ENCODE measurements at regions of chr20 and their contacts with region 1.

Region 1: DNA sequence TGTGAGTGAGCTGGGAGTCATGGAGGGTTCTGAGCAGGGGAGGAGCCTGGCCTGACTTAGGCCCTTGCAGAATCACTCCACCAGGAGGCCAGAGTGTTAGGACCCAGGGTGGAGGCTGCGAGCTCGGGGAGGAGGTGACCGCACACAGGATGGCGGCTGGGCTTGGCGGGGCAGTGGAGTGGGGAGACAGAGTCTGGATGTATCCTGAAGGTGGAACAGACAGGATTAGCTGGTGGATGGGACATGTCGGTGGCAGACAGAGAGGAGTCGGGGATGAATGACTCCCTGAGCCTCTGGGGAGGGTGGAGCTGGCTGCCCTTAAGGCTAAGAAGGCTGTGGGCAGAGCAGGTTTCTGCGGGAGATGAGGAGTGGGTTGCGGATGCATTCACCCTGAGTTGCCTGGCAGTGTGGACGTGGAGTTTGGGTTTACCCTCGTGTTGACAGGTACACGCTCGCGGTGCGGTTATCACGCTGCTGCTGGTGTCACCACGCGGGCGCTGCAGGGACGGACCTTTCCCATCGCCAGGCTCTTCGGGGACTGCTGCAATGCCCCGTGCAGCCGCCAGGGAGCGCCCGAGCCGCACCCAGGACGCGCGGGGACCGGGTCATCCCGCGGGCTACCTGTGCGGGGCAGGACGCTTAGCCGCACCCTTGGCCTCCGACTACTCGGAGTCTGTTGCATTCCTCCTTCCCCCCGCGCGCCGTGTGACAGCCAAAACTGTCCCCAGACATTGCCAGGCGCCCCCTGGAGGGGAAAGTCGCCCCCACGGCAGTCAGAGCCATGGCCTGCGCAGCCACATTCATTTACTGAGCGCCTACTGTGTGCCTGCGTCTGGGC is 43.0 kb upstream of the PTGIS start:
- DNase-seq: peak; percentile 89
- ATAC-seq: peak; percentile 76
- H3K4me3 Mint-ChIP-seq: no peak overlapping the region
- H3K27ac Mint-ChIP-seq: no peak overlapping the region
- H3K4me1 Mint-ChIP-seq: peaks cover 15% of the 10 kb centered on the region
- H3K27me3 Mint-ChIP-seq: peaks cover 12% of the 10 kb centered on the region

Region 2: GRCh38 chr20:49338061-49338460 is 272.9 kb before region 1 on chr20:
- CTCF ChIA-PET with region 1: interaction called, 4 read pairs
- POLR2A ChIA-PET with region 1: no interaction called
- intact Hi-C with region 1: loop called (anchors 1 kb)
- DNase-seq: no peak
- ATAC-seq: no peak
- H3K4me3 Mint-ChIP-seq: no peak overlapping the region
- H3K27ac Mint-ChIP-seq: no peak overlapping the region
- H3K4me1 Mint-ChIP-seq: no peaks in the 10 kb centered on the region
- H3K27me3 Mint-ChIP-seq: peaks cover 5% of the 10 kb centered on the region

Region 3: DNA sequence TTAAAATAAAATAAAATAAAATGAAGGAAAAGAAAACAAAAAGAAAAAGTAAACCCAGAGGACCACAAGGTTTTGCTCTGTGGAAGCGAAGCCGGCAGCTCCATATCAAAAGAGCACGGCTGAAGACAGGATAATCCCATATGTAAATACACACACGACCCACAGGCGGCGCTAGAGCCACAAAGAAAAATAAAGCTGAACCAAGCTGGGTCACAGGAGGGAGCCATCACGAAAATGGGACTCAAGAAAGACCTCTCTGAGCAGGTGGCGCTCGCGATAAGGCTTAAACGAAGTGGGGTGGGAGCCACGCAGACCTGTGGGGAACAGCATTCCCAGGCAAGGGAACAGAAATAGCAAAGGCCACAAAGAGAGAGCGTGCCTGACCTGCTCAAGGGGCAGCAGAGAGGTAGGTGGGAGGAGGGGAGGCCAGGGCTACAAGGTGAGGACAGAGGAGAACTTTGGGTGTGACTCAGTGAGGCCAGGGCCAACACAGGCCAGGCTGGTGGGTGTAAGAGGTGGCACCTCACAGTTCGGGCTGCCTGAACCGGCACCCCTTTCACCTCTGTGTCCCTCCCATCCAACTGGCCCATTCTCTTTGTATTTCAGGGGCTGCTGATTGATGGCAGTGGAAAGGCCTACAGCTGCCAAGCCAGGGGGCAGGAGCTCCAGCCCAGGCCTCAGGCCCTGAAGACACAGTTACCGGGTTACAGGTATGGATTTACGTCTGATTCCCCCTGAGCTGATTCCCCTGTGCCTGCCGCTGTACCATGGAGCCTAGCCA is 69.0 kb before region 1 on chr20:
- CTCF ChIA-PET with region 1: interaction called, 145 read pairs
- POLR2A ChIA-PET with region 1: no interaction called
- intact Hi-C with region 1: loop called (anchors 1 kb)
- DNase-seq: peak; percentile 84
- ATAC-seq: peak; percentile 87
- H3K4me3 Mint-ChIP-seq: no peak overlapping the region
- H3K27ac Mint-ChIP-seq: peak overlapping the region; percentile 85
- H3K4me1 Mint-ChIP-seq: peaks cover 10% of the 10 kb centered on the region
- H3K27me3 Mint-ChIP-seq: peaks cover 11% of the 10 kb centered on the region

Region 4: DNA sequence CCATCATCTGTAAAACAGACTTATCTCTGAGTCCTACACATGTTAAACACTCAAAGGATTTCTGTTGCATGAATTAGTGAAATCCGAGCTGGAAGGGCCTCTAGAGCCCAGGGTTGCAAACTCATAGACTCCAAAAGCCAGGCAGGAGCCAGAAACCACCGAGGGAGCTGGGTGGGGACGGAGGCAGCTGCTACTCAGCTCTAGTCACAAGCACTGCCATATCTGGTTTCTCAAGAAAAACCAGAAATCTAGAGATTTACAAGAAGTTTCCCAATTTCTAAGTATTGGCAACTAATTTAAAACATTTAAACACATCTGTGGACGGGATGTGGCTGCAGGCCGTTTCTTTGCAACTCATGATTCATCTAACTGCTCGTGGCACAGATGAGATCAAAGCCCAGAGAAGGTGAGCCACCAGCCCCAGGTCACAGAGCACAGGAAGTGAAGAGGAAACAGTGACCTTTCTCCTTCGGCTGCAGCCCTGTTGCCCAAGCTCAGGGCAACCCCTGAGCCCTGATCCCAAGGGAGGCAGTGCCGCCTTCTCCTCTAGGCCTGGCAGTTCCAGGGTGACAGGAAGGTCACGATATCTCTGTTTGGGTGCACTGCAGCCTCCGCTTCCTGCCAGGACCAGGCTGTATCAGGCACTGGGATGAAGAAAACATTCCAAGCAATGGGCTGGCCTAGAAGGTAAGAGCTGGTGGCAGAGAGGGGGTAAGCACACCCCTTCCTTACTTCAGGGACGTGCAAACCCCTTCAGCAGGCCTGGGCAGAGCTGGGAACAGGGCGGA is 16.6 kb before region 1 on chr20:
- CTCF ChIA-PET with region 1: interaction called, 38 read pairs
- POLR2A ChIA-PET with region 1: no interaction called
- intact Hi-C with region 1: no loop called
- DNase-seq: peak; percentile 87
- ATAC-seq: peak; percentile 62
- H3K4me3 Mint-ChIP-seq: peak overlapping the region; percentile 76
- H3K27ac Mint-ChIP-seq: peak overlapping the region; percentile 96
- H3K4me1 Mint-ChIP-seq: peaks cover 77% of the 10 kb centered on the region
- H3K27me3 Mint-ChIP-seq: peaks cover 3% of the 10 kb centered on the region

Region 5: GRCh38 chr20:49846206-49846807 is 235.4 kb after region 1 on chr20:
- CTCF ChIA-PET with region 1: interaction called, 59 read pairs
- POLR2A ChIA-PET with region 1: no interaction called
- intact Hi-C with region 1: loop called (anchors 1 kb)
- DNase-seq: peak; percentile 67
- ATAC-seq: peak; percentile 81
- H3K4me3 Mint-ChIP-seq: no peak overlapping the region
- H3K27ac Mint-ChIP-seq: no peak overlapping the region
- H3K4me1 Mint-ChIP-seq: peaks cover 7% of the 10 kb centered on the region
- H3K27me3 Mint-ChIP-seq: no peaks in the 10 kb centered on the region

Region 6: DNA sequence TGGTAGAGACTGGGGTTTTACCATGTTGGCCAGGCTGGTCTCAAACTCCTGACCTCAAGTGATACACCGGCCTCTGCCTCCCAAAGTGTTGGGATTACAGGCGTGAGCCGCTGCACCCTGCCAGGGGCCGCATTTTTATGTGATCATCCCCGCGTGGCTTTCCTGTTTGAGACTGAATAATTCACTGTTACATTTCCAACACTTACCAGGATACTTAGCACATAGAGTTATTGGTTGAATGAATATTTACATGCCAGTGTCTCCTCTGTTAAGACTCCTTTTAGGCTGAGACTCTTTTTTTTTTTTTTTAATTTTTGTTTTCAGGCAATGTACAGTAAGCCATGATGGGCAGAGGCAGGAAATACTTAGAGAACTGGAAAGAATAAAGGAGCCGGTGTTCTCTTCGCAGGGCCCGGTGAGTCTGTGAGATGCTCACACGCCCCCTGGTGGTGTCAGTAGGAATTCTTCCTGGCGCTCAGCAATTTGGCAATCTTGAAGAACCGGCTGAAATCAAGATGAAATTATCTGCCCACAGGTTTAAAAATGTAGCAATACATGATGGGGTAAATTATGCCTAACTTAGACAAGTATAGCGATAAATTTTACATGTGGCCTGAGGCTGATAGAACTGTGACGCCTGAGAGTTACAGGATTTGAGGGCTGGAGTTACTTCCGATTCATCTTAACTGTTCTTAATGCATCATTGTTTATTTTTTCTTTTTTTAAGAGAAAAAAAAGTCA is 317.7 kb after region 1 on chr20:
- CTCF ChIA-PET with region 1: interaction called, 4 read pairs
- POLR2A ChIA-PET with region 1: no interaction called
- intact Hi-C with region 1: loop called (anchors 1 kb)
- DNase-seq: peak; percentile 90
- ATAC-seq: peak; percentile 98
- H3K4me3 Mint-ChIP-seq: no peak overlapping the region
- H3K27ac Mint-ChIP-seq: peak overlapping the region; percentile 63
- H3K4me1 Mint-ChIP-seq: peaks cover 6% of the 10 kb centered on the region
- H3K27me3 Mint-ChIP-seq: peaks cover 2% of the 10 kb centered on the region

Measured in activated CD4-positive, alpha-beta T cell treated with anti-CD3 and anti-CD28 coated beads for 36 hours (primary cell).